ENCODE measurements at regions of chr7 and their contacts with region 1.

Region 1: DNA sequence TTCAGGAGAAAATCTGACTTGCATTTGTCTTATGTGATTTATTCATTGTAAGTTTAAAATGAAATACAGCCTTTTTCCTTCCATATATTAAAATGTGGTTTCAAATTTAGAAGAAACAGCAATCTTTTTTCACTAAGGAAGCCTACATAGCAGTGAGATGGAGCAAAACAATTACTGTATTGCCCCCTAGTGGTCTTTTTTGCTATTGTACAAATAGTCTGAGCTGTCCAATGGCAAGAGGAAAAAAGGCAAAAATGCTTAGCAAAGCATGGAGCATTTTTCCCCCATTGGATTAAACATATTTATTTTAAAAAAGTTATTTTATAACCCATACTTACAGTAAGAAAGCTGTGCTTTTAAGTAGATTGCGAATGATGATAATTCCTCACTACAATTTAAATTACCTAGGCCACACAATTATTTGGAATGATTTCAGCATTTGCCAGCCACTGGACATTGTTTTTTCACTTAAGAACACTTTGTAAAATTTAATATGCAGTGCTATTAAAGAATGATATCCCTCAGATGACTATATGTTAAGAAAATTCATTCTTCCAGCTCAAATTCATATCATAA is 119.5 kb downstream of the CPED1 start:
- DNase-seq: no peak
- ATAC-seq: peak in 7 of 8 donors; percentile 72 to 87 (median 80)
- H3K4me3 ChIP-seq: no peak overlapping the region
- H3K27ac ChIP-seq: no peak overlapping the region
- H3K4me1 ChIP-seq: peaks cover 0 to 24% (median 13%) of the 10 kb centered on the region in 9 donors
- H3K27me3 ChIP-seq: no peaks in the 10 kb centered on the region
- CTCF ChIP-seq: peak; percentile 69 to 87 (median 84)

Region 2: DNA sequence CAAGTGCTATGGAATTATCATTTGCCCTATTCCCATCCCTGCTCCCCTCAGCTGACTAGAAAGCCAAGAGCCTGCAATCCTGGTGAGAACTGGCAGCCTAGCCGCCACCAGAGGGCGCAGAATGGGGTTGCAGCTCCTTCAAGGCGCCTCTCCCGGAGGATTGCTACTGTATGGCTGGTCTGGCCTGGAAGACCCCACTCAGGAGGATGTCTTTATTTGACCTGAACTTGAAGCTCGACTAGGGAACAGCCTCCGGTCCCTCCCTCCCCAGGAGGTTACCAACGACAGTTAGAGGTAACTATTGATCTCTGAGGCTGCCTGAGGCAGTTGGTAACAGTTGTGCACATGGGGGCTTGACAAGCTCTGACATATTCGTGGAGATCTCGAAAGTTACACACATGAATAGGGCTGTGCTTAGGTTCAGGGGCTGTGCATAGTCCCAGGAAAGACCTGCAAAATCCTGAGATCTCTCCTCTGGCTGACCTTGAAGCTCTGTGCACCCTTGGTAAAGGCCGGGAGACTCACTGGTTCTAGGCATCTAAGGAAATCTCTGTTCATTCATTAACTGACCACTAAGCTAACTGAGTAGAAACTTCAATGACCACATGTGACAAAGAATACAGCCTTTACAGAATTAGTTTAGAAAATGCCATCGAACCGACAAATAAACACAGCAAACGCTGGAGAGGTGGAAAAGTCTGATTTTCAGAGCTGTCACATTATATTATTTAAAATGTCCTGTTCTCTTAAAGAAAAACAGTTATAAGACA is 315.7 kb before region 1 on chr7:
- intact Hi-C with region 1: loop called in 4 of 10 experiments (anchors 5 to 10 kb)
- DNase-seq: peak; percentile 70 to 79
- ATAC-seq: peak; percentile 74 to 93 (median 86)
- H3K4me3 ChIP-seq: no peak overlapping the region
- H3K27ac ChIP-seq: no peak overlapping the region
- H3K4me1 ChIP-seq: peaks cover 0 to 47% (median 16%) of the 10 kb centered on the region in 9 donors
- H3K27me3 ChIP-seq: no peaks in the 10 kb centered on the region
- CTCF ChIP-seq: peak; percentile 68 to 93 (median 85)

Region 3: GRCh38 chr7:120799813-120800475 is 308.1 kb before region 1 on chr7:
- intact Hi-C with region 1: loop called in 7 of 10 experiments (anchors 5 to 10 kb)
- DNase-seq: no peak
- ATAC-seq: no peak
- H3K4me3 ChIP-seq: no peak overlapping the region
- H3K27ac ChIP-seq: no peak overlapping the region
- H3K4me1 ChIP-seq: peaks cover 0 to 27% (median 14%) of the 10 kb centered on the region in 9 donors
- H3K27me3 ChIP-seq: no peaks in the 10 kb centered on the region
- CTCF ChIP-seq: no peak

Region 4: DNA sequence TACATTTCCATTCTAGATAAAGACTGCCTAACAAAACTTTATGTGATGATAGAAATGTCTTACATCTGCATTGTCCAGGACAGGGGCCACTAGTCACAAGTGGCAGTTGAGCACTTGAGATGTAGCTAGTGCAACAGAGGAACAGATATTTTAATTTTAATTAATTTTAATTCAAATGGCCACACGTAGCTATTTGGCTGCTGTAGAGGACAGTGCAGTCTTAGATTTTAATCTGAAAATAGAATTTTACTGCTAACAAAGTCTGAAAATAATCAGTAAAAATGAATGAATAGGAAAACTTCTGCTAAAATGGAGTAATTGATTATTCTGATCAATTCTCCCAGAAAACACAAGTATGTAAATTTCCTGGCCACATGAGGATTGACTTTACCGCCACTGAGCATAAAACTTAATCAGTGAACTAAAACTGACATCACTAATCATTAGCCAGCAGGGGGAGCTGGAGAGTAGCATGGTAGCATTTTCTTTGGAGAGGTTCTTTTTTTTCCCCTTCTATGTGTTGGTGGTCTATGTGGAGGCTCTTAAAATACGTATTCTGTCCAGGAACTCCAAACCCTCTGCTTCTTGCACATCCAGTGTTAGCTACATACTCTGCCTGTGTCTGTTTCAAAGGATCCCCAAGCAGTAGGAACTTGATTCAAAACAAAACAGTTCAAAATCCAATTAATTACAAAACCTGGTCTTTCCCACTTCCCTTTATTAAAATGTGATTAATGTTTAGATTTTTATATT is 302.2 kb before region 1 on chr7:
- intact Hi-C with region 1: loop called in 4 of 10 experiments (anchors 5 to 10 kb)
- DNase-seq: peak in 1 of 2 donors; percentile 78
- ATAC-seq: peak in 6 of 8 donors; percentile 47 to 65 (median 64)
- H3K4me3 ChIP-seq: no peak overlapping the region
- H3K27ac ChIP-seq: no peak overlapping the region
- H3K4me1 ChIP-seq: peaks cover 0 to 35% (median 17%) of the 10 kb centered on the region in 9 donors
- H3K27me3 ChIP-seq: no peaks in the 10 kb centered on the region
- CTCF ChIP-seq: peak; percentile 82 to 96 (median 87)

Region 5: GRCh38 chr7:120857588-120858573 is 250.1 kb before region 1 on chr7 and contains the start of gene TSPAN12:
- intact Hi-C with region 1: loop called in 1 of 10 experiments (anchors 10 kb)
- DNase-seq: peak; percentile 86 to 88
- ATAC-seq: peak; percentile 93 to 97 (median 94)
- H3K4me3 ChIP-seq: peak within 1 kb of the TSS; percentile 48 to 87 (median 72)
- H3K27ac ChIP-seq: peak within 1 kb of the TSS; percentile 88 to 98 (median 92)
- H3K4me1 ChIP-seq: peaks cover 0 to 37% (median 15%) of the 10 kb centered on the region in 9 donors
- H3K27me3 ChIP-seq: peaks cover 0 to 53% (median 0%) of the 10 kb centered on the region in 7 donors
- CTCF ChIP-seq: peak; percentile 60 to 88 (median 79)
- total RNA-seq, gene TSPAN12: 35.2 to 78.6 (median 64.5) TPM

Region 6: GRCh38 chr7:120987683-120988590 is 120.1 kb before region 1 on chr7:
- intact Hi-C with region 1: loop called in 7 of 10 experiments (anchors 1 to 5 kb)
- DNase-seq: peak; percentile 89 to 90
- ATAC-seq: peak; percentile 83 to 93 (median 88)
- H3K4me3 ChIP-seq: peak overlapping the region; percentile 40 to 75 (median 58)
- H3K27ac ChIP-seq: peak overlapping the region; percentile 64 to 97 (median 91)
- H3K4me1 ChIP-seq: peaks cover 0 to 48% (median 14%) of the 10 kb centered on the region in 9 donors
- H3K27me3 ChIP-seq: peaks cover 0 to 26% (median 0%) of the 10 kb centered on the region in 7 donors
- CTCF ChIP-seq: peak; percentile 88 to 99 (median 97)

Region 7: GRCh38 chr7:121081327-121081936 is 26.6 kb before region 1 on chr7:
- intact Hi-C with region 1: loop called in 1 of 10 experiments (anchors 2 kb)
- DNase-seq: no peak
- ATAC-seq: peak in 7 of 8 donors; percentile 49 to 62 (median 58)
- H3K4me3 ChIP-seq: no peak overlapping the region
- H3K27ac ChIP-seq: peak overlapping the region in 2 of 10 donors; percentile 31 to 34
- H3K4me1 ChIP-seq: peaks cover 0 to 60% (median 41%) of the 10 kb centered on the region in 9 donors
- H3K27me3 ChIP-seq: no peaks in the 10 kb centered on the region
- CTCF ChIP-seq: peak; percentile 64 to 84 (median 78)